Aorta (tissue), 5 donors: ENCODE measurements at regions of chr2 and their contacts with region 1.

Region 1: DNA sequence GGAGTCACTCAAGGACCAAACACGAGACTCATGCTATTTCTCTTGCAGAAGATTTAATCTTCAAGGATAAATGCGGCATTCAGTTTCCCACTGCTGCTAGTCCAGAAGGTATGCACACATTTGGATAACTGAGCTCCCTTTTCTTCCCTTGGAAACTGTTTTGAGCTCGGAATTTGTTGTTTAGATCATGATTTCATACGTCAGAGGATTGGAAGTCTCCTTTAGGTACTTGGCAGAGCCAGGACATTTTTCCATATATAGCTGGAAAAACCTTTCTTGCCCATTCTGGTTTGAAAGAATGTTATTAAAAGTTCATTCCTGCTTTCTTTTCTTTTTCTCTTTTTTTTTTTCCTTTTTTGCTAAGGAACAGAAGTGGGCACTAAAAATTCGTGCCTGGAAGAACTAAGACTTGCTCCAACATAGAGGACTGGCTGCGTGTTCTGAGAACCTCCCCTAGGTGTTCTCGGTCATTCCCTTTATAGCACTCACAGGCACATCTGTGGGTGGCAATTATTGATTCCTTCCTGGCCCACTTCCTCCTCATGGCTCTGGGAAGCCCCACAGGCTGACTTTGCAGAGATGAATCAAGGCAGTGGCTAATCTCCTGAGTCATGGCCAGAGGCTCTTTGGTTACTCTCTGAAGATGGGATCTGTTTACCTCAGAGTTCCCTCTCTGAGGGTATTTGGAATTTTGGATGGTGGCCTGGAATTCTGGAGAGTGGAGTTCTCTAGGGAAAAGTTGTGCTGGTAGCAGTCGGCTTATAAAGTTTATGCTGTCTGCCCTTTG is 104.8 kb downstream of the PLCL1 start:
- DNase-seq: no peak
- ATAC-seq: no peak
- H3K4me3 ChIP-seq: no peak overlapping the region
- H3K27ac ChIP-seq: peak overlapping the region; percentile 43 to 72
- H3K4me1 ChIP-seq: peaks cover 5 to 17% of the 10 kb centered on the region in 2 donors
- H3K27me3 ChIP-seq: no peaks in the 10 kb centered on the region

Region 2: GRCh38 chr2:197461057-197461456 is 448.1 kb before region 1 on chr2:
- intact Hi-C with region 1: loop called in 1 of 2 experiments (anchors 5 kb)
- DNase-seq: no peak
- ATAC-seq: no peak
- H3K4me3 ChIP-seq: no peak overlapping the region
- H3K27ac ChIP-seq: no peak overlapping the region
- H3K4me1 ChIP-seq: no peaks in the 10 kb centered on the region
- H3K27me3 ChIP-seq: no peaks in the 10 kb centered on the region

Region 3: GRCh38 chr2:197813093-197813787 is 95.9 kb before region 1 on chr2:
- intact Hi-C with region 1: loop called in 1 of 2 experiments (anchors 10 kb)
- DNase-seq: no peak
- ATAC-seq: no peak
- H3K4me3 ChIP-seq: no peak overlapping the region
- H3K27ac ChIP-seq: no peak overlapping the region
- H3K4me1 ChIP-seq: peaks cover 1 to 11% of the 10 kb centered on the region in 2 donors
- H3K27me3 ChIP-seq: no peaks in the 10 kb centered on the region

Region 4: DNA sequence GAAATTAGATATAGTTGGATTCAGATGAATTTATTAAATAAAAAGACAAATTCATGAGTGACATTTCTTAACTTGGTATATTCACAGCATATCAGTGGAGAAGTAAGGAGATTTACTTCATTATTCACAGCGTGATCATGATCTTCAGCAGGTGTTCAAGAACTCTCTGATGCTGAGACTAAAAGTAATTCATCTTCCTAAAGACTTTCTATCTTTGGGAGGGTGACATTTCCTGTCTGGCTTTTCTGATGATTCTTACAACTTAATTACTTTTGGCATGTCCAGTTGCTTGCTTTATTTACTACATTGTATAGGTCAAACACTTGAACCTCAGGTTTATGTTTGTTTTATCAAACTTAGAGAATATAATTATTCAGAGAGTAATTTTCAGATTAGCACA is 119.8 kb after region 1 on chr2:
- intact Hi-C with region 1: no loop called
- DNase-seq: no peak
- ATAC-seq: no peak
- H3K4me3 ChIP-seq: no peak overlapping the region
- H3K27ac ChIP-seq: no peak overlapping the region
- H3K4me1 ChIP-seq: peaks cover 0 to 3% of the 10 kb centered on the region in 2 donors
- H3K27me3 ChIP-seq: no peaks in the 10 kb centered on the region